ENCODE measurements at regions of chr11 and their contacts with region 1.

Region 1: DNA sequence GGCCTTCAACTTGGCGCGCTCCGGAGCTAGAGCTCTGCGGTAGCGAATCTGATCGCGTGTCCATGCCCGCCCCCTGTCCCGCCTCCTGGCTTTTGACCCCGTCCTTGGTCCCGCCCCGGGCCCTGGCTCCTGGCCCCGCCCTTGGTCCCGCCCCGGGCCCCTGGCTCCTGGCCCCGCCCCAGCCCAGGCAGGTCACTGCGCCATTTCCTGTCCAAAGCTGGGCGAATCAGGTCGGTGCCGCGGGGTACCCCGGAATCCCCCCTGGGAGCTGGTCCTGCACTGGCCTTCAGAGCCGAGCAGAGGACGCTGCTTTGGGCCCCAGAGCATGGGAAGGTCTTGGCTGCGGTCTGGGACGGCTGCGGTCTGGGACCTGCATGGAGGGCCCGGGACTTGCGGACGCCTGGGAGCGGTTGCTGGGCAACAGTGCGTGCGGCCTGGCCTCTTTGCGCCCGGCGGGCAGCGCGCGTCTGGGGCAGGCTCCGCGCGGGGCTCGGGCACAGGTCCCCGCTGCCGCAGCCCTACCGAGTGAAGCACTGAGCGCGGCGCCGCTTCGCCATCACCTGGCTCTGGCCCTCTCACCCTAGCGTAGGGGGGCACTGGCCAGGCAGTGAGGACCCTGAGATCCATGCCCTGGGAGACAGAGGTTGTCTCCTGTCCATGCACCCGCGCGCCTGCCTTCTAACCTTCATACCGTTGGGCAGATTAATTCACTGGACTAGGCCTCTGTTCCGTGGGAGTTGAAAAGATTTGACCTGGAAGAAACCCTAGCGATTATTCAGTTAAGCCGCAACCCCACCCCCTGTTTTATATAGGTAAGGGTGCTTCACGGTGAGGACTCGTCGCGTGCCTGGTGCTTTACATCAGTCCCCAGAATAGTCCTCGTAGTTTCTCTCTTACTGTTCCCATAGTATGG is at the start of gene TTC12:
- DNase-seq: peak; percentile 98
- H3K4me3 ChIP-seq: peak within 1 kb of the TSS; percentile 70 to 83 (median 75)
- H3K27ac ChIP-seq: peak within 1 kb of the TSS; percentile 82 to 91 (median 89)
- H3K4me1 ChIP-seq: peaks cover 16 to 33% (median 26%) of the 10 kb centered on the region in 4 donors
- H3K27me3 ChIP-seq: no peaks in the 10 kb centered on the region
- CTCF ChIP-seq: no peak
- EP300 ChIP-seq: no peak
- POLR2A ChIP-seq: no peak
- total RNA-seq, gene TTC12: 10.4 to 16.2 (median 13.3) TPM

Region 2: GRCh38 chr11:112086422-112087191 is 1228.0 kb before region 1 on chr11 and contains the starts of genes SDHD and TIMM8B:
- intact Hi-C with region 1: loop called (anchors 10 kb)
- DNase-seq: peak; percentile 98
- H3K4me3 ChIP-seq: peak within 1 kb of the TSS; percentile 66 to 95 (median 76)
- H3K27ac ChIP-seq: peak within 1 kb of the TSS; percentile 79 to 84 (median 83)
- H3K4me1 ChIP-seq: peaks cover 41 to 47% (median 43%) of the 10 kb centered on the region in 4 donors
- H3K27me3 ChIP-seq: no peaks in the 10 kb centered on the region
- CTCF ChIP-seq: peak; percentile 12 to 37 (median 31)
- EP300 ChIP-seq: no peak
- POLR2A ChIP-seq: peak; percentile 56
- total RNA-seq, gene SDHD: 112 to 148 (median 128) TPM
- total RNA-seq, gene TIMM8B: 27.8 to 57.7 (median 30.9) TPM

Region 3: GRCh38 chr11:113167595-113167994 is 147.1 kb before region 1 on chr11:
- intact Hi-C with region 1: no loop called
- DNase-seq: no peak
- H3K4me3 ChIP-seq: no peak overlapping the region
- H3K27ac ChIP-seq: no peak overlapping the region
- H3K4me1 ChIP-seq: peaks cover 0 to 11% (median 6%) of the 10 kb centered on the region in 4 donors
- H3K27me3 ChIP-seq: no peaks in the 10 kb centered on the region
- CTCF ChIP-seq: no peak
- EP300 ChIP-seq: no peak
- POLR2A ChIP-seq: no peak

Region 4: GRCh38 chr11:113286509-113287497 is 27.8 kb before region 1 on chr11:
- intact Hi-C with region 1: no loop called
- DNase-seq: no peak
- H3K4me3 ChIP-seq: no peak overlapping the region
- H3K27ac ChIP-seq: no peak overlapping the region
- H3K4me1 ChIP-seq: peaks cover 0 to 8% (median 0%) of the 10 kb centered on the region in 4 donors
- H3K27me3 ChIP-seq: no peaks in the 10 kb centered on the region
- CTCF ChIP-seq: no peak
- EP300 ChIP-seq: no peak
- POLR2A ChIP-seq: no peak

Region 5: GRCh38 chr11:113431746-113432145 is 117.1 kb after region 1 on chr11:
- intact Hi-C with region 1: no loop called
- DNase-seq: no peak
- H3K4me3 ChIP-seq: no peak overlapping the region
- H3K27ac ChIP-seq: no peak overlapping the region
- H3K4me1 ChIP-seq: no peaks in the 10 kb centered on the region
- H3K27me3 ChIP-seq: no peaks in the 10 kb centered on the region
- CTCF ChIP-seq: no peak
- EP300 ChIP-seq: no peak
- POLR2A ChIP-seq: no peak

Measured in esophagus muscularis mucosa (tissue), 4 donors.